ENCODE measurements at regions of chr11 and their contacts with region 1.

Region 1: GRCh38 chr11:62726915-62727763 is at the start of gene HNRNPUL2:
- DNase-seq: peak; percentile 99
- H3K4me3 ChIP-seq: peak within 1 kb of the TSS; percentile 95 to 99
- H3K4me3 Mint-ChIP-seq: peak within 1 kb of the TSS; percentile 84 to 98 (median 96)
- H3K27ac ChIP-seq: peak within 1 kb of the TSS; percentile 93
- H3K27ac Mint-ChIP-seq: peak within 1 kb of the TSS; percentile 98 to 99 (median 99)
- H3K4me1 ChIP-seq: peaks cover 50% of the 10 kb centered on the region
- H3K4me1 Mint-ChIP-seq: peaks cover 28 to 84% (median 50%) of the 10 kb centered on the region in 4 donors
- H3K27me3 ChIP-seq: no peaks in the 10 kb centered on the region
- H3K27me3 Mint-ChIP-seq: no peaks in the 10 kb centered on the region
- total RNA-seq, gene HNRNPUL2: 79.6 to 83.4 TPM

Region 2: GRCh38 chr11:62179995-62180394 is 547.1 kb before region 1 on chr11:
- CTCF ChIA-PET with region 1: no interaction called
- POLR2A ChIA-PET with region 1: no interaction called
- intact Hi-C with region 1: no loop called
- DNase-seq: no peak
- H3K4me3 ChIP-seq: no peak overlapping the region
- H3K4me3 Mint-ChIP-seq: no peak overlapping the region
- H3K27ac ChIP-seq: no peak overlapping the region
- H3K27ac Mint-ChIP-seq: no peak overlapping the region
- H3K4me1 ChIP-seq: no peaks in the 10 kb centered on the region
- H3K4me1 Mint-ChIP-seq: no peaks in the 10 kb centered on the region
- H3K27me3 ChIP-seq: no peaks in the 10 kb centered on the region
- H3K27me3 Mint-ChIP-seq: peaks cover 19 to 21% of the 10 kb centered on the region in 2 donors

Region 3: GRCh38 chr11:62556108-62556871 is 170.8 kb before region 1 on chr11:
- CTCF ChIA-PET with region 1: no interaction called
- POLR2A ChIA-PET with region 1: interaction called, 19 read pairs
- intact Hi-C with region 1: no loop called
- DNase-seq: peak; percentile 85 to 97 (median 87)
- H3K4me3 ChIP-seq: peak overlapping the region; percentile 37 to 75
- H3K4me3 Mint-ChIP-seq: peak overlapping the region; percentile 82 to 91 (median 90)
- H3K27ac ChIP-seq: peak overlapping the region; percentile 95
- H3K27ac Mint-ChIP-seq: peak overlapping the region; percentile 98 to 100 (median 100)
- H3K4me1 ChIP-seq: peaks cover 98% of the 10 kb centered on the region
- H3K4me1 Mint-ChIP-seq: peaks cover 73 to 97% (median 85%) of the 10 kb centered on the region in 4 donors
- H3K27me3 ChIP-seq: no peaks in the 10 kb centered on the region
- H3K27me3 Mint-ChIP-seq: peaks cover 0 to 2% of the 10 kb centered on the region in 2 donors

Region 4: DNA sequence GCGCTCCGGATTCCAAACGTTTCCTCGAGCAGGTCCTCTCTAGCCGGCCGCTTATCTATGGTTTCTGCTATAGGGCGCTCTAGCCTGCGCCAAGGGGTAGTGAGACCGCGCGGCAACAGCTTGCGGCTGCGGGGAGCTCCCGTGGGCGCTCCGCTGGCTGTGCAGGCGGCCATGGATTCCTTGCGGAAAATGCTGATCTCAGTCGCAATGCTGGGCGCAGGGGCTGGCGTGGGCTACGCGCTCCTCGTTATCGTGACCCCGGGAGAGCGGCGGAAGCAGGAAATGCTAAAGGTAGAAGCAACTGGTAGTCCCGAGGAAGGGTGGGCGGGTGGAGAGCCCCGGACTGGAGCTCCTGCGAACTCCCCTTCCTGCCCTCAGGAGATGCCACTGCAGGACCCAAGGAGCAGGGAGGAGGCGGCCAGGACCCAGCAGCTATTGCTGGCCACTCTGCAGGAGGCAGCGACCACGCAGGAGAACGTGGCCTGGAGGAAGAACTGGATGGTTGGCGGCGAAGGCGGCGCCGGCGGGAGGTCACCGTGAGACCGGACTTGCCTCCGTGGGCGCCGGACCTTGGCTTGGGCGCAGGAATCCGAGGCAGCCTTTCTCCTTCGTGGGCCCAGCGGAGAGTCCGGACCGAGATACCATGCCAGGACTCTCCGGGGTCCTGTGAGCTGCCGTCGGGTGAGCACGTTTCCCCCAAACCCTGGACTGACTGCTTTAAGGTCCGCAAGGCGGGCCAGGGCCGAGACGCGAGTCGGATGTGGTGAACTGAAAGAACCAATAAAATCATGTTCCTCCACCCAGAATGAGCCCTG is 55.4 kb before region 1 on chr11 and contains the starts of genes LBHD1 and UQCC3:
- CTCF ChIA-PET with region 1: no interaction called
- POLR2A ChIA-PET with region 1: interaction called, 71 read pairs
- intact Hi-C with region 1: no loop called
- DNase-seq: peak; percentile 68 to 80 (median 75)
- H3K4me3 ChIP-seq: peak within 1 kb of the TSS; percentile 91 to 97
- H3K4me3 Mint-ChIP-seq: peak within 1 kb of the TSS; percentile 93 to 99 (median 99)
- H3K27ac ChIP-seq: peak within 1 kb of the TSS; percentile 74
- H3K27ac Mint-ChIP-seq: peak within 1 kb of the TSS; percentile 89 to 98 (median 97)
- H3K4me1 ChIP-seq: peaks cover 55% of the 10 kb centered on the region
- H3K4me1 Mint-ChIP-seq: peaks cover 14 to 74% (median 43%) of the 10 kb centered on the region in 4 donors
- H3K27me3 ChIP-seq: no peaks in the 10 kb centered on the region
- H3K27me3 Mint-ChIP-seq: no peaks in the 10 kb centered on the region
- total RNA-seq, gene LBHD1: 26.7 to 28.6 TPM
- total RNA-seq, gene UQCC3: 7.2 to 8.5 TPM

Region 5: GRCh38 chr11:62753736-62754603 is 26.8 kb after region 1 on chr11 and contains the start of gene ZBTB3:
- CTCF ChIA-PET with region 1: interaction called, 6 read pairs
- POLR2A ChIA-PET with region 1: interaction called, 231 read pairs
- intact Hi-C with region 1: loop called (anchors 1 kb)
- DNase-seq: peak; percentile 99
- H3K4me3 ChIP-seq: peak within 1 kb of the TSS; percentile 68 to 98
- H3K4me3 Mint-ChIP-seq: peak within 1 kb of the TSS; percentile 96 to 99 (median 98)
- H3K27ac ChIP-seq: peak within 1 kb of the TSS; percentile 90
- H3K27ac Mint-ChIP-seq: peak within 1 kb of the TSS; percentile 94 to 100 (median 99)
- H3K4me1 ChIP-seq: peaks cover 45% of the 10 kb centered on the region
- H3K4me1 Mint-ChIP-seq: peaks cover 15 to 41% (median 25%) of the 10 kb centered on the region in 4 donors
- H3K27me3 ChIP-seq: no peaks in the 10 kb centered on the region
- H3K27me3 Mint-ChIP-seq: no peaks in the 10 kb centered on the region
- total RNA-seq, gene ZBTB3: 27.2 to 27.9 TPM

Region 6: GRCh38 chr11:62805076-62805892 is 78.1 kb after region 1 on chr11 and contains the start of gene NXF1:
- CTCF ChIA-PET with region 1: no interaction called
- POLR2A ChIA-PET with region 1: interaction called, 22 read pairs
- intact Hi-C with region 1: no loop called
- DNase-seq: peak; percentile 90 to 98 (median 96)
- H3K4me3 ChIP-seq: peak within 1 kb of the TSS; percentile 87 to 93
- H3K4me3 Mint-ChIP-seq: peak within 1 kb of the TSS; percentile 97 to 100 (median 99)
- H3K27ac ChIP-seq: peak within 1 kb of the TSS; percentile 94
- H3K27ac Mint-ChIP-seq: peak within 1 kb of the TSS; percentile 97 to 100 (median 99)
- H3K4me1 ChIP-seq: peaks cover 22% of the 10 kb centered on the region
- H3K4me1 Mint-ChIP-seq: peaks cover 20 to 43% (median 31%) of the 10 kb centered on the region in 4 donors
- H3K27me3 ChIP-seq: no peaks in the 10 kb centered on the region
- H3K27me3 Mint-ChIP-seq: peaks cover 0 to 2% of the 10 kb centered on the region in 2 donors
- total RNA-seq, gene NXF1: 195 to 196 TPM

Region 7: GRCh38 chr11:62823677-62824076 is 96.5 kb after region 1 on chr11:
- CTCF ChIA-PET with region 1: no interaction called
- POLR2A ChIA-PET with region 1: no interaction called
- intact Hi-C with region 1: no loop called
- DNase-seq: no peak
- H3K4me3 ChIP-seq: no peak overlapping the region
- H3K4me3 Mint-ChIP-seq: no peak overlapping the region
- H3K27ac ChIP-seq: no peak overlapping the region
- H3K27ac Mint-ChIP-seq: peak overlapping the region in 2 of 7 donors; percentile 36 to 70
- H3K4me1 ChIP-seq: no peaks in the 10 kb centered on the region
- H3K4me1 Mint-ChIP-seq: peaks cover 3 to 12% (median 9%) of the 10 kb centered on the region in 4 donors
- H3K27me3 ChIP-seq: no peaks in the 10 kb centered on the region
- H3K27me3 Mint-ChIP-seq: no peaks in the 10 kb centered on the region

Region 8: GRCh38 chr11:62860835-62861563 is 133.9 kb after region 1 on chr11:
- CTCF ChIA-PET with region 1: interaction called, 4 read pairs
- POLR2A ChIA-PET with region 1: interaction called, 95 read pairs
- intact Hi-C with region 1: loop called (anchors 1 kb)
- DNase-seq: no peak
- H3K4me3 ChIP-seq: no peak overlapping the region
- H3K4me3 Mint-ChIP-seq: no peak overlapping the region
- H3K27ac ChIP-seq: no peak overlapping the region
- H3K27ac Mint-ChIP-seq: peak overlapping the region in 2 of 7 donors; percentile 37 to 72
- H3K4me1 ChIP-seq: peaks cover 23% of the 10 kb centered on the region
- H3K4me1 Mint-ChIP-seq: peaks cover 11 to 25% (median 18%) of the 10 kb centered on the region in 4 donors
- H3K27me3 ChIP-seq: no peaks in the 10 kb centered on the region
- H3K27me3 Mint-ChIP-seq: no peaks in the 10 kb centered on the region

Measured in CD4-positive, alpha-beta memory T cell (primary cell).